ENCODE measurements at regions of chr16 and their contacts with region 1.

Region 1: DNA sequence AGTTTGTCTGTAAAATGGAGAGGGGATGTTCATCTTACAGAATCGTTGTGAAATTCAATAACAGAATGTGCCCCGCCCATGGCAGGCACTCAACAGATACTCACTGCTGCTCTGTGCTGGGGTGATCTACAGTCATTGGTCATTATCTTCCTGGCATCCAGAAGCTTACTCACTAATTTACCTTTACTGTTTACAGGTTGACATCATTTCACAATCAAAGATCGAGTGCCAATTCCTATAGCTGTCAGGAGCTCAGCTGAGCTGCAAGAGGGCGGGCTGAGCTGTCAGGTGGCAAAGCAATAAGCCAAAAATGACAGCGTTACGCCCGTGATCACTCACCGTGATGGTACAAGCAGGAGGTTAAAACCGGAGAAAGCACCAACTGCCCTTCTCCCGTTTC is 51.2 kb downstream of the LITAF start:
- DNase-seq: no peak
- ATAC-seq: no peak
- H3K4me3 Mint-ChIP-seq: peak overlapping the region in 1 of 10 donors; percentile 63
- H3K27ac Mint-ChIP-seq: peak overlapping the region in 3 of 10 donors; percentile 50 to 52 (median 51)
- H3K4me1 Mint-ChIP-seq: peaks cover 9 to 33% (median 28%) of the 10 kb centered on the region in 4 donors
- H3K27me3 Mint-ChIP-seq: no peaks in the 10 kb centered on the region

Region 2: DNA sequence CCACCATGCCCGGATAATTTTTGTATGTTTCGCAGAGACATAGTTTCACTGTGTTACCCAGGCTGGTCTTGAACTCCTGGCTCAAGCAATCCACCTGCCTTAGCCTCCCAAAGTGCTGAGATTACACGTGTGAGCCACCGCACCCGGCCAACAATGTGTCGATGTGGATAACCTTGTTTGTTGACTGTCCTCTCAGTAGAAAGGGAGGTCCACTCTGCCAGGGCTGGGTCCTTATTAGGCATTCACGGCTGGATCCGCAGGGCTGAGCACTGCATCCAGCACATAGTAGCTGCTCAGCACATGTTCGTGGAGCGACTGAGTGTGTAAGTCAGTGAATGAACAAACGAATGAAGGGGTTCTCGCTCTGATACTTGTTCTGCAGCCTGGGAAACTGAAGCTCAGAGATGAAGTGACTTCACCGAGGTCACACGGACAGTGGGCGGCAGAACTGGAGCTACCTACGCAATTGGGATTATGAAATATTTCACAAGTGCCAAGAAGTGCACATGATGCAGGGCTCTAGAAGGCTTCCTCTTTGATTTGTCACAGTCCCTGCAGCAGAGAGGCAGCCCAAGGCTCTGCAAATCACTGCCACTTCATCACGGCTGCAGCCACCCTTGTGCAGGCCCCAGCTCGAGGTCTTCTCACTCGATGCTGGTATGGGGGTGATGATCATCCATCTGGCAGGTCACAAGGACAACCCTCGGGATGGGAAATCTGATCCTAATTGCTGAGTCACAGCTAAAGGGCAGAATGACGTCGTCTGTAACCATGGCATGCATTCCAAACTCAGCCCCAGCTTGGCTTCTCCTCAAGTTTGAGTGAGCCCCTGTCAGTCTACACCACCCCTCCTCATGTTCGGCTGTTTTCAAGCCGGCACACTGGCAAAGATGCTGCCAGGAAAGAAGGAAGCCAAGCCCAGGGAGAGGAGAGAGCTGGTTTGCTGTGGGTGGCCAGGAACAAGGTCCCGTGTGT is 104.7 kb after region 1 on chr16:
- POLR2A ChIA-PET with region 1: interaction called, 10 read pairs
- DNase-seq: peak in 1 of 10 donors; percentile 16
- ATAC-seq: no peak
- H3K4me3 Mint-ChIP-seq: peak overlapping the region in 1 of 10 donors; percentile 3
- H3K27ac Mint-ChIP-seq: peak overlapping the region in 8 of 10 donors; percentile 11 to 91 (median 50)
- H3K4me1 Mint-ChIP-seq: peaks cover 18 to 30% (median 25%) of the 10 kb centered on the region in 4 donors
- H3K27me3 Mint-ChIP-seq: peaks cover 0 to 1% (median 0%) of the 10 kb centered on the region in 5 donors